Activated CD8-positive, alpha-beta T cell treated with anti-CD3 and anti-CD28 coated beads, Interleukin-2, amount 10 ng/mL, durations not matched to agents 7 days and 5 days (primary cell): ENCODE measurements at regions of chr9 and their contacts with region 1.

Region 1: DNA sequence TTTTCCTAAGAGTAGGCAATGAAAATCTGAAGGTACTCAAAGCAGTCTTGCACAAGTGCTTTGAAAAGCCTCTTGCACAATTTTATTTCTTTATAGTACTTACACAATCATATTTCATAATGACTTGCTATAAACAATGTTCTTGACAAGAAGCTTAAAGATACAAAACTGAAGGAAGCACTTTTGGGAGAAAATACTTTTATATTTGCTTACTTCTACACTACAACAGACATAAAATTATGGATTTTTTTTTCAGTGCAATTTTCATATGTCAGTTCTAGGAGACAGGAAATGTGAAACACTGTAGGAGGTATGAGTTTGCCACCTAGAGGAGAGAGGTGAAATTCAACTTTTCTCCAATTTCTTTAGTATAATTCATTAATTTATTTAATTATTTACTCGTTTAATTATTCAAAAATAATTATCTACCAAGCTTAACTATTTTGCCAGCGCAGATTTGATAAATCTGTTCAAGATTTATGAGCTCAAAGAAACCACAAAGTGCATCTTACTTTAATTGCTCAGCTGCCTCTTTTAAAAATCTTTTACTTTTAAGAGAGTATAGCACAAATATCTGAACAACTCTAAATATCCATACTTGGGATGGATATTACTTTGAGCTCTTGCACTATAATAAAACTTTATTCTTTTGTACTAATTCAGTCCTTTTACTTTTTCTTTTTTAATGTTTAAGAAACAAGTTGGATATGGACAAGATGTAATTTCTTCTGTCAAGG is 29.0 kb upstream of the CDKN2B start:
- DNase-seq: no peak
- ATAC-seq: no peak
- H3K4me3 Mint-ChIP-seq: no peak overlapping the region
- H3K27ac Mint-ChIP-seq: no peak overlapping the region
- H3K4me1 Mint-ChIP-seq: peaks cover 58% of the 10 kb centered on the region
- H3K27me3 Mint-ChIP-seq: peaks cover 14% of the 10 kb centered on the region

Region 2: DNA sequence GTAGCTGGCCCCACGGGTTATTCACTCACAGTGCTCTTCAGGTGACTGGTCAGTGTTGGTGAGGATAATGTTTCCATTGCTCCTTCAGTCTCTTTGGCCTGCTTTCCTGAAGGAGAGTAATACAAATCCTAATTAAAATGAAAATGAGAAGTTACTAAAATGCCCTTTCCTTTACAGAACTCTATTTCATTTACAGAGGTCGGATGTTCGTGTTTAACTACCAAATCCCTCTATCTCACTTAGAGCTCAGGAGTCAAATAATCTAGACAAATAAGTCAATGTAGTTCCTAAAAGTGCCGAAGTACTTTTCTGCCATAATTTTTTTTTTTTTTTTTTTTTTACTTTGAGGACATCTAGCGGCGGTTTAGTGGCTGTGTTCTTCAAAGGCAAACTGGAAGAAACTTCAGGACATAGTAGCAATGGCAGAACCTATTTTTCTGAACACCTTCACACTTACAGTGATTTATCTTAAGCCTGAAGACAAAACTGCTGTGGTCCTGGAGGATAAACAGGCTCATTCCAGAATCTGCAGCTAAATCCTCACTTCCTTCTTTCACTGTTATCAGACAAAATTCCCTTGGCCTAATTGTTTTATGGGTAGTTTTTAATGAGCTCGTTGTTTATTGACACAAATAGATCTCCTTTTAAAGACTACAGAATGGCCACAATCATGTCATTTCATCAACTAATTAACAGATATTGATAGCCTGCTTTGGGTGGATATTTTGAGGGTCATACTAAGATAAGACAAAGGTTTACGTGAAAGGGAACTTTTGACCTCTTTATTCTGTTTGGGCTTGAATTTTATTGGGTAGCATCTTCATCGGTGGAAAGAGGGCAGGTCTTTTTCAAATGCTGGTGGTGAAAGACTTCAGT is 200.9 kb after region 1 on chr9:
- CTCF ChIA-PET with region 1: interaction called, 14 read pairs
- POLR2A ChIA-PET with region 1: no interaction called
- DNase-seq: no peak
- ATAC-seq: peak; percentile 36
- H3K4me3 Mint-ChIP-seq: no peak overlapping the region
- H3K27ac Mint-ChIP-seq: peak overlapping the region; percentile 14
- H3K4me1 Mint-ChIP-seq: peaks cover 48% of the 10 kb centered on the region
- H3K27me3 Mint-ChIP-seq: peaks cover 17% of the 10 kb centered on the region